Heart right ventricle (tissue), 16 donors: ENCODE measurements at regions of chr10 and their contacts with region 1.

Region 1: GRCh38 chr10:72215652-72216549 is at the starts of genes ANAPC16 and ASCC1:
- DNase-seq: peak; percentile 91 to 93
- ATAC-seq: peak; percentile 97 to 98 (median 98)
- H3K4me3 ChIP-seq: peak within 1 kb of the TSS; percentile 23 to 84 (median 70)
- H3K27ac ChIP-seq: peak within 1 kb of the TSS; percentile 89 to 99 (median 98)
- H3K4me1 ChIP-seq: peaks cover 10 to 49% (median 39%) of the 10 kb centered on the region in 9 donors
- H3K27me3 ChIP-seq: no peaks in the 10 kb centered on the region
- CTCF ChIP-seq: peak in 2 of 9 donors; percentile 6 to 8
- total RNA-seq, gene ANAPC16: 181 to 246 (median 221) TPM
- total RNA-seq, gene ASCC1: 25.2 to 40.5 (median 33.0) TPM

Region 2: DNA sequence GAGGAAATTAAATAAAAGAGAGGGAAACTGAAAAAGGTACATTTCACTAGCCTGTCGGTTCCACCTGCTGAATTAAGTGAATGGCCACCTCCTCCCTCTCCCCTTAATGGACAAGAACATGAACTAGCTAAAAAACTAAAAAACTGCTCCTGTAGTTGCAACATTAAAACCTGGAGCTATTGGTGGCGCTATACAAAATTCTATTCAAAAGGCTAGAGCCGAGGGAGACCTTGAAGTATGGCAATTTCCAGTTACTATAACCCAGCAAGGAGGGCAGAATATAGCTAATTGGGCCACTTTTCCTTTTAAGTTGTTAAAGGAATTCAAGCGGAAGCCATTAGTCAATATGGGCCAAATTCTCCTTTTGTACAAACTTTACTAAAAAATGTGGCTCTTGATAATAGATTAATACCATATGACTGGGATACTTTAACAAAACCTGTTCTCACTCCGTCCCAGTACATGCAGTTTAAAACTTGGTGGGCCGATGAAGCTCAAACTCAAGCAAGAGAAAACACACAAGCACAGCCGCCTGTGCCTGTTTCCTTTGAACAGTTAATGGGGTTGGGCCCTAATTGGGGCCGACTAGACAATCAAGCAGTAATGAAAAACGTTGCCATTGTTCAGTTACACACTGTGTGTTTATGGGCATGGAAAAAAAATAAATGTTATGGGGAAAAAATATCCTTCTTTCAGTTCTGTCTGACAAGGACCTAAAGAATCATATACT is 258.2 kb before region 1 on chr10:
- intact Hi-C with region 1: loop called in 5 of 10 experiments (anchors 5 to 10 kb)
- DNase-seq: no peak
- ATAC-seq: no peak
- H3K4me3 ChIP-seq: no peak overlapping the region
- H3K27ac ChIP-seq: no peak overlapping the region
- H3K4me1 ChIP-seq: peaks cover 2 to 12% (median 8%) of the 10 kb centered on the region in 9 donors
- H3K27me3 ChIP-seq: no peaks in the 10 kb centered on the region
- CTCF ChIP-seq: peak in 1 of 9 donors; percentile 8

Region 3: GRCh38 chr10:72058989-72059842 is 156.7 kb before region 1 on chr10:
- intact Hi-C with region 1: loop called in 5 of 10 experiments (anchors 10 kb)
- DNase-seq: no peak
- ATAC-seq: no peak
- H3K4me3 ChIP-seq: no peak overlapping the region
- H3K27ac ChIP-seq: peak overlapping the region in 1 of 10 donors; percentile 26
- H3K4me1 ChIP-seq: peaks cover 0 to 17% (median 4%) of the 10 kb centered on the region in 9 donors
- H3K27me3 ChIP-seq: no peaks in the 10 kb centered on the region
- CTCF ChIP-seq: no peak

Region 4: DNA sequence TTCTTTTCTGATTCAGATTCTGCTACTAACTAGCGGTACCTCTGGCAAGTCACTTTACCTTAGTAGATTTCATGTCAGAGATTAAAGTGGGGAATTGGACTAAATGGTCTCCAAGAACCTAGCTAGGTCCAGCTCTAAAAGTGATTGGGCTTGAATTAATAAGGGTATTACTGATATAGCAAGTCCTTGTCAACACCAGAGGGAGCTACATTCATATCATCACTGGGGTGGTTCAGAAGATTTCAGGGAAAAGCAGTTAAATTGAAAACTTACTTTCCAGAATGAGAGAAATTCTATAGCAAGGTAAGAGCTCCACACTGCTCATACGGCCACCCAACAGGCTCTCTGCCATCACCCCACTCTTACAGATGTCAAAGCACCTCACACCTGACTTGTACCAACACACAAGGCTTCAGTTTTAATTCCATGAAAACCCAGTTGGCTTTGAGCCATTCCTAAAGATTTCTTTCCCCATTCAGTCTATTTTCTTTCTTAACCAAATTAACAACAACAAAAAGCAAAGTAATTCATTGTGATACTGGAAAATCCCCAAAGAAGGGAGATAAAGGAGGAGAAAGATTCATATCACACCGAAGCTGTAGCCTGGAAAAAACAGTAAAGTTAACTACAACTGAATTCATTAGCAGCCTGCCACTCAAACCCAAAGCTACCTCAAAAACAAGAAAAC is 89.6 kb before region 1 on chr10:
- intact Hi-C with region 1: loop called in 7 of 10 experiments (anchors 5 to 10 kb)
- DNase-seq: no peak
- ATAC-seq: peak in 3 of 8 donors; percentile 22 to 41 (median 32)
- H3K4me3 ChIP-seq: no peak overlapping the region
- H3K27ac ChIP-seq: peak overlapping the region in 1 of 10 donors; percentile 1
- H3K4me1 ChIP-seq: peaks cover 0 to 25% (median 6%) of the 10 kb centered on the region in 9 donors
- H3K27me3 ChIP-seq: no peaks in the 10 kb centered on the region
- CTCF ChIP-seq: peak; percentile 7 to 57 (median 38)

Region 5: GRCh38 chr10:72173635-72174296 is 42.1 kb before region 1 on chr10:
- intact Hi-C with region 1: loop called in 1 of 10 experiments (anchors 5 kb)
- DNase-seq: no peak
- ATAC-seq: peak in 2 of 8 donors; percentile 12 to 29
- H3K4me3 ChIP-seq: no peak overlapping the region
- H3K27ac ChIP-seq: peak overlapping the region; percentile 11 to 73 (median 60)
- H3K4me1 ChIP-seq: peaks cover 2 to 46% (median 21%) of the 10 kb centered on the region in 9 donors
- H3K27me3 ChIP-seq: no peaks in the 10 kb centered on the region
- CTCF ChIP-seq: no peak

Region 6: GRCh38 chr10:72337020-72337629 is 121.2 kb after region 1 on chr10:
- intact Hi-C with region 1: loop called in 4 of 10 experiments (anchors 2 to 5 kb)
- DNase-seq: peak; percentile 88 to 90
- ATAC-seq: peak; percentile 30 to 51 (median 43)
- H3K4me3 ChIP-seq: no peak overlapping the region
- H3K27ac ChIP-seq: peak overlapping the region; percentile 46 to 97 (median 90)
- H3K4me1 ChIP-seq: peaks cover 34 to 70% (median 57%) of the 10 kb centered on the region in 9 donors
- H3K27me3 ChIP-seq: no peaks in the 10 kb centered on the region
- CTCF ChIP-seq: peak; percentile 95 to 99 (median 96)

Region 7: DNA sequence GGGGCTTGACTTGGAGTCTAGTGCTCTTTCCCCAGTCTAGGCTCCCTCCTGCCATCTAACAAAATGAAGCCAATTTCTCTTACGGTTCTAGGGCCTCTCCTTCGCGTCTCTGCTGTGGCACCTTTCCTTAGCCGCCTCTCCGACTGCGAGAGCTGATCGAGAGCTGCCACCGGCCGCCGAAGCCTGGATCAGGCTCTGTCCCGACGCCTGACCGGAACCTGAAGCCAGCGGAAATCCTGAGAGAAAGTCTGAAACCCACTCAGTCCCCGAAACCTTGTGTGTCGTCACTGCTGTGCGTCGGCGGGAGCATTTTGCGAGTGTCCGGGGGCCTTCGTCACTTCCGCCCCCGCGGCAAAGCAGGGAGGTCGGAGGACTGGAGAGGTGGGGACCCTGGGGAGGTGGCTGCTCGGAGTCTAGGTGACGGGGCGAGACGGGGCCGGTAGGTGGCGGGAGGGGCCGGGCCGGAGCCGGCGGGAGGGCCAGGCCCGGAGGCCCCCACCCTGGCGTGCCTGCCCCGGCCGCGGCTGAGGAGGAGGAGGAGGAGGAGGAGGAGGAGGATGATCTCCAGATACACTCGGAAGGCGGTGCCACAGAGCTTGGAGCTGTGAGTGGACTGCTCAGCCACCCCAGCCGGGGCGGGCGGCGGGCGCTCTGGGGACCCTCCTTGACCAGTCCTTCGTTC is 952.0 kb after region 1 on chr10 and contains the starts of genes ECD and FAM149B1:
- intact Hi-C with region 1: no loop called
- DNase-seq: peak; percentile 92 to 96
- ATAC-seq: peak; percentile 97 to 99 (median 99)
- H3K4me3 ChIP-seq: peak within 1 kb of the TSS; percentile 71 to 95 (median 86)
- H3K27ac ChIP-seq: peak within 1 kb of the TSS; percentile 87 to 98 (median 94)
- H3K4me1 ChIP-seq: peaks cover 0 to 52% (median 43%) of the 10 kb centered on the region in 9 donors
- H3K27me3 ChIP-seq: no peaks in the 10 kb centered on the region
- CTCF ChIP-seq: peak in 3 of 9 donors; percentile 25 to 39 (median 36)
- total RNA-seq, gene ECD: 14.0 to 22.9 (median 19.0) TPM
- total RNA-seq, gene FAM149B1: 12.2 to 19.7 (median 16.7) TPM